ENCODE measurements at regions of chr10 and their contacts with region 1.

Region 1: GRCh38 chr10:3785257-3785850 is 345 bp upstream of the KLF6 start:
- DNase-seq: peak; percentile 99 to 100 (median 99)
- ATAC-seq: peak; percentile 86
- H3K4me3 ChIP-seq: peak overlapping the region; percentile 75
- H3K4me3 Mint-ChIP-seq: peak overlapping the region; percentile 85 to 99 (median 94)
- H3K27ac ChIP-seq: peak overlapping the region; percentile 99
- H3K27ac Mint-ChIP-seq: peak overlapping the region; percentile 93 to 99 (median 99)
- H3K4me1 ChIP-seq: peaks cover 21 to 30% of the 10 kb centered on the region in 2 donors
- H3K4me1 Mint-ChIP-seq: peaks cover 21 to 52% (median 37%) of the 10 kb centered on the region in 7 donors
- H3K27me3 ChIP-seq: no peaks in the 10 kb centered on the region
- H3K27me3 Mint-ChIP-seq: peaks cover 0 to 12% (median 0%) of the 10 kb centered on the region in 5 donors

Region 2: GRCh38 chr10:3172446-3173170 is 612.7 kb before region 1 on chr10 and contains the start of gene PITRM1:
- CTCF ChIA-PET with region 1: no interaction called
- POLR2A ChIA-PET with region 1: interaction called, 3 read pairs
- intact Hi-C with region 1: loop called in 1 of 2 experiments (anchors 2 kb)
- DNase-seq: peak; percentile 98 to 99 (median 99)
- ATAC-seq: peak; percentile 92
- H3K4me3 ChIP-seq: peak within 1 kb of the TSS; percentile 77
- H3K4me3 Mint-ChIP-seq: peak within 1 kb of the TSS; percentile 73 to 95 (median 88)
- H3K27ac ChIP-seq: peak within 1 kb of the TSS; percentile 82
- H3K27ac Mint-ChIP-seq: peak within 1 kb of the TSS; percentile 64 to 93 (median 88)
- H3K4me1 ChIP-seq: peaks cover 5 to 6% of the 10 kb centered on the region in 2 donors
- H3K4me1 Mint-ChIP-seq: peaks cover 9 to 31% (median 23%) of the 10 kb centered on the region in 7 donors
- H3K27me3 ChIP-seq: no peaks in the 10 kb centered on the region
- H3K27me3 Mint-ChIP-seq: peaks cover 0 to 33% (median 0%) of the 10 kb centered on the region in 5 donors
- total RNA-seq, gene PITRM1: 56.5 to 90.8 (median 85.4) TPM

Region 3: GRCh38 chr10:3757638-3758490 is 27.5 kb before region 1 on chr10:
- CTCF ChIA-PET with region 1: interaction called, 3 read pairs
- POLR2A ChIA-PET with region 1: interaction called, 5 read pairs
- intact Hi-C with region 1: loop called in 1 of 2 experiments (anchors 1 kb)
- DNase-seq: peak in 1 of 9 donors; percentile 62
- ATAC-seq: peak; percentile 80
- H3K4me3 ChIP-seq: no peak overlapping the region
- H3K4me3 Mint-ChIP-seq: peak overlapping the region in 2 of 10 donors; percentile 56 to 82
- H3K27ac ChIP-seq: no peak overlapping the region
- H3K27ac Mint-ChIP-seq: peak overlapping the region in 4 of 9 donors; percentile 65 to 99 (median 83)
- H3K4me1 ChIP-seq: peaks cover 0 to 56% of the 10 kb centered on the region in 2 donors
- H3K4me1 Mint-ChIP-seq: peaks cover 5 to 79% (median 24%) of the 10 kb centered on the region in 7 donors
- H3K27me3 ChIP-seq: no peaks in the 10 kb centered on the region
- H3K27me3 Mint-ChIP-seq: no peaks in the 10 kb centered on the region

Region 4: GRCh38 chr10:3811291-3811870 is 26.0 kb after region 1 on chr10:
- CTCF ChIA-PET with region 1: interaction called, 4 read pairs
- POLR2A ChIA-PET with region 1: interaction called, 401 read pairs
- intact Hi-C with region 1: loop called in 1 of 2 experiments (anchors 1 kb)
- DNase-seq: peak in 6 of 9 donors; percentile 22 to 54 (median 32)
- ATAC-seq: peak; percentile 62
- H3K4me3 ChIP-seq: peak overlapping the region; percentile 33
- H3K4me3 Mint-ChIP-seq: peak overlapping the region; percentile 10 to 85 (median 70)
- H3K27ac ChIP-seq: peak overlapping the region; percentile 71
- H3K27ac Mint-ChIP-seq: peak overlapping the region in 6 of 9 donors; percentile 67 to 91 (median 88)
- H3K4me1 ChIP-seq: peaks cover 52 to 65% of the 10 kb centered on the region in 2 donors
- H3K4me1 Mint-ChIP-seq: peaks cover 41 to 80% (median 63%) of the 10 kb centered on the region in 7 donors
- H3K27me3 ChIP-seq: no peaks in the 10 kb centered on the region
- H3K27me3 Mint-ChIP-seq: no peaks in the 10 kb centered on the region

Region 5: DNA sequence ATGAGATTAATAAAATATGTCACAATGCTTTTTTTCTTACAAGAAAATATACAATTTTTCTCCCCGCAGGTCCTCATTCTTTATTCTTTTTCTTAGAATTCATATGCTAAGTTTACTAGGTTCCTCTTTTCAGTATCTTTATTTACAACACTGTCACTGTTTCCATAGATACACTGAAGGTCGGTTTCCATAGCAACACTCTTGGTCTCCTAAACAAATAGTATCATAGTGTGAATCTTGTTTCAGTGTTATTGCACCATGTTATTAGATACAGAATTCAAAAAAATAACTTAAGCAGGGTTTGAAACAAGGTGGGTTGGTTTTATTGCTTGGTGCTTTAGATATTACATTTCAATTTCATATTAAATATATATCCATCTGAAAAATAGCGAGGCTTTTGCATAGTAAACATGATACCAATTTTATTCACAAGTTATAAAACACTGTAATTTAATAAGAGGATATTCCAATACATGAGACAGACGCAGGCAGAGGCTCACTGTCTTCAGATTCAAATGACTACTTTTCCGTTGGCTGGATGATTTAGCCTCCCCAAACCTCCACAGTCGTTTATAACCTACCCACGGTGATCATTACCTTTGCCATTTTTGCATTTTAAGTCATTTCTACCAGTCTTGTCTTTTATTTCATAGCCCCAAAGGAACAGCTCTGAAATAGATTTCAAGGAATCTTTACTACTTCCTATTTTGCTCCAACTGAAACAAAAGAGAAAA is 88.5 kb after region 1 on chr10:
- CTCF ChIA-PET with region 1: interaction called, 3 read pairs
- POLR2A ChIA-PET with region 1: interaction called, 74 read pairs
- intact Hi-C with region 1: loop called (anchors 1 kb)
- DNase-seq: peak in 8 of 9 donors; percentile 8 to 85 (median 74)
- ATAC-seq: peak; percentile 77
- H3K4me3 ChIP-seq: no peak overlapping the region
- H3K4me3 Mint-ChIP-seq: peak overlapping the region in 7 of 10 donors; percentile 14 to 73 (median 46)
- H3K27ac ChIP-seq: peak overlapping the region; percentile 65
- H3K27ac Mint-ChIP-seq: peak overlapping the region; percentile 87 to 95 (median 91)
- H3K4me1 ChIP-seq: peaks cover 41 to 51% of the 10 kb centered on the region in 2 donors
- H3K4me1 Mint-ChIP-seq: peaks cover 30 to 59% (median 57%) of the 10 kb centered on the region in 7 donors
- H3K27me3 ChIP-seq: no peaks in the 10 kb centered on the region
- H3K27me3 Mint-ChIP-seq: no peaks in the 10 kb centered on the region

Region 6: GRCh38 chr10:3955493-3955892 is 170.1 kb after region 1 on chr10:
- CTCF ChIA-PET with region 1: interaction called, 4 read pairs
- POLR2A ChIA-PET with region 1: interaction called, 25 read pairs
- intact Hi-C with region 1: no loop called
- DNase-seq: no peak
- ATAC-seq: no peak
- H3K4me3 ChIP-seq: no peak overlapping the region
- H3K4me3 Mint-ChIP-seq: no peak overlapping the region
- H3K27ac ChIP-seq: no peak overlapping the region
- H3K27ac Mint-ChIP-seq: peak overlapping the region in 1 of 9 donors; percentile 15
- H3K4me1 ChIP-seq: peaks cover 9 to 19% of the 10 kb centered on the region in 2 donors
- H3K4me1 Mint-ChIP-seq: peaks cover 2 to 17% (median 8%) of the 10 kb centered on the region in 7 donors
- H3K27me3 ChIP-seq: no peaks in the 10 kb centered on the region
- H3K27me3 Mint-ChIP-seq: no peaks in the 10 kb centered on the region

Region 7: DNA sequence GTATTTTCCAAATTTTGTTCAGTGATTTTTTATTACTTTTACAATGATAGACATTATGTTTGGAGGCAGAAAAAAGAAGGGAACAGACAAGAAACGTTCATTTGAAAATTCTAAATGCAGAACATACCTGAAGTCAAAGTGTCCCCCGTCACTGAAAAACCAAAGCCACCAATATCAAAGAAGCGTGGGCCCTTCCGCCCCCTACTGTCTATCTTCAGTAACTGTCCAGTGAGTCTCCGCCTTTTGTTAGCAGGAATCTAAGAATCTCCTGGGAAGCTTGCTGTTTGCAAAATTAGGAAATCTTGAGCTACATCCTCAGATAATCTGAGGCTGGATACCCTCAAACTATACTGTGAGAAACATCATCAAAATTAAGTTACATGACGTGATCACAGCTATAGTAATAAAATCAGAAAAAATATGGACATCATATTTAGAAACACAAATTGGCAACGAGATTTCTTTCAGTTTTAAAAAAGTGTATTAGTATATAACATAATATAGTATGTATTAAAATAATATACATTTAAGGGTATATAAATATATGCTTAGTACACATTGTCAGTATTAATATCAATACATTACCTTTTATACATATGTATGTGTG is 871.3 kb after region 1 on chr10:
- CTCF ChIA-PET with region 1: no interaction called
- POLR2A ChIA-PET with region 1: no interaction called
- intact Hi-C with region 1: loop called in 1 of 2 experiments (anchors 10 kb)
- DNase-seq: peak in 8 of 9 donors; percentile 16 to 50 (median 36)
- ATAC-seq: no peak
- H3K4me3 ChIP-seq: no peak overlapping the region
- H3K4me3 Mint-ChIP-seq: no peak overlapping the region
- H3K27ac ChIP-seq: no peak overlapping the region
- H3K27ac Mint-ChIP-seq: no peak overlapping the region
- H3K4me1 ChIP-seq: no peaks in the 10 kb centered on the region
- H3K4me1 Mint-ChIP-seq: peaks cover 0 to 11% (median 0%) of the 10 kb centered on the region in 7 donors
- H3K27me3 ChIP-seq: no peaks in the 10 kb centered on the region
- H3K27me3 Mint-ChIP-seq: peaks cover 4 to 30% (median 8%) of the 10 kb centered on the region in 5 donors

Measured in naive thymus-derived CD4-positive, alpha-beta T cell (primary cell).